ENCODE measurements at regions of chr12 and their contacts with region 1.

Region 1: DNA sequence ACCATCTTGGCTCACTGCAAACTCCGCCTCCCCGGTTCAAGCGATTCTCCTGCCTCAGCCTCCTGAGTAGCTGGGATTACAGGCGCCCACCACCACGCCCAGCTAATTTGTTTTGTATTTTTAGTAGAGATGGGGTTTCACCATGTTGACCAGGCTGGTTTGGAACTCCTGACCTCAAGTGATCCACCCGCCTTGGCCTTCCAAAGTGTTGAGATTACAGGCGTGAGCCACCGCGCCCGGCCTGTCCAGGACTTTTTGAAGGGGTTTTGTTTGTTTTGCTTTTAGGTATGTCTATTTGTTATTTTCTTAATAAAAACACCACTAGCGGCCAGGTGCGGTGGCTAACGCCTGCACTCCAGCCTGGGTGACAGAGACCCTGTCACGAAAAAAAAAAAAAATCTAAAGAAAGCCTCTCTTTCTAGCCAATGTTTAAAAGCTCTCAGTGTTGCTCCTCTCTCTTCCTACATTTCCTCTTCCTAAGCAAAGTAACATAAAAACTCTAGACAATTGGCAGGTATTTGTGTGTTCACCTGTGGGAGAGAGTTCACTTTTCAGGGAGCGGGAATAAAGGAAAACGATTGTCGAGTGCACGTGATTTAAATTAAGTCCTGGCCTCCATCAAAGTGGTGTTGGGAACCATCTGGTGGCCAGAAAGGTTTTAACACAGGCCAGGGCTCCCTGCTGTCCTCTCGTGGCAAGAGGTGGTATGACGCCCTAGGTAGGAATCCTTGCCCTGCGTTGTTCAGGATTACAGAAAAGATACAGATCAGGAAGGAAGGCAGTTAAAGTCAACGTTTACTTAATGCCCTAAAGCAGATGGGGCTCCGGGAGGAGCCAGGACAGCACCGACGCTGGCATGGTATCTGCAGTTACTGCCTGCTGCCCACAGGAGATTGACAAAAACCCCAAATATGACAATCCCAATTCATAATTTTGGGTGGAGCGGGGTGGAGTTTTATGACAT is 36.2 kb upstream of the ATP23 start:
- DNase-seq: peak; percentile 88 to 97
- H3K4me3 ChIP-seq: no peak overlapping the region
- CTCF ChIP-seq: peak; percentile 96 to 100 (median 99)
- POLR2A ChIP-seq: no peak

Region 2: GRCh38 chr12:57583008-57583831 is 321.9 kb before region 1 on chr12:
- intact Hi-C with region 1: loop called (anchors 10 kb)
- DNase-seq: peak in 1 of 2 donors; percentile 59
- H3K4me3 ChIP-seq: no peak overlapping the region
- CTCF ChIP-seq: peak in 1 of 3 donors; percentile 91
- POLR2A ChIP-seq: no peak

Region 3: DNA sequence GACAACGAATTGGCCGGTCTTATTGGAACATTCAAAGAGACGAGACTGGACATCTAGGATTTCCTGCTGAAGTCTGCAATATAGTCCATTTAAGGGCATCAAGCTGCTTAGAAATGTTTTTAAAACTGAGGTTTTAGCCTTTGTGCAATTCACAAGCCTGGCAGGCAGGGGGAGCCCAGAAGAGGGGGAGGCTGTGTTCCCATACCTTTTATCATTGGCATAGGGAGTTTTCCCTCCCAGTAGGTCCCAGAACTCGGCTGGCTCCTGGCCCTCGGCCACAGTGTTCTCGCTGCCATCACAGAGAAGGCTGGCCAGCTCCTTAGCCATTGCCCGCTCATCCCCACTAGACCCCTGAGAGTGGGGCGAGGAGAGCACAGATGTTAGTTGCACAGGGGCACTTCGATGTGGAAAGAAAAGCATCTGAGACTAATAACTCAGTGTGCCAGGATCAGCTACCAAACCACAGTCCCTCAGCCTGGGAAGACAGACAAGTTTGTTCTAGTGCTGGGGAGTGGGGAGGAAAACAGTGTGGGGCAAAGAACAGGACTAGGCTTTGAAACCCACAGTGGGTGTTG is 101.7 kb before region 1 on chr12:
- intact Hi-C with region 1: loop called (anchors 10 kb)
- DNase-seq: no peak
- H3K4me3 ChIP-seq: no peak overlapping the region
- CTCF ChIP-seq: peak in 1 of 3 donors; percentile 57
- POLR2A ChIP-seq: no peak

Region 4: DNA sequence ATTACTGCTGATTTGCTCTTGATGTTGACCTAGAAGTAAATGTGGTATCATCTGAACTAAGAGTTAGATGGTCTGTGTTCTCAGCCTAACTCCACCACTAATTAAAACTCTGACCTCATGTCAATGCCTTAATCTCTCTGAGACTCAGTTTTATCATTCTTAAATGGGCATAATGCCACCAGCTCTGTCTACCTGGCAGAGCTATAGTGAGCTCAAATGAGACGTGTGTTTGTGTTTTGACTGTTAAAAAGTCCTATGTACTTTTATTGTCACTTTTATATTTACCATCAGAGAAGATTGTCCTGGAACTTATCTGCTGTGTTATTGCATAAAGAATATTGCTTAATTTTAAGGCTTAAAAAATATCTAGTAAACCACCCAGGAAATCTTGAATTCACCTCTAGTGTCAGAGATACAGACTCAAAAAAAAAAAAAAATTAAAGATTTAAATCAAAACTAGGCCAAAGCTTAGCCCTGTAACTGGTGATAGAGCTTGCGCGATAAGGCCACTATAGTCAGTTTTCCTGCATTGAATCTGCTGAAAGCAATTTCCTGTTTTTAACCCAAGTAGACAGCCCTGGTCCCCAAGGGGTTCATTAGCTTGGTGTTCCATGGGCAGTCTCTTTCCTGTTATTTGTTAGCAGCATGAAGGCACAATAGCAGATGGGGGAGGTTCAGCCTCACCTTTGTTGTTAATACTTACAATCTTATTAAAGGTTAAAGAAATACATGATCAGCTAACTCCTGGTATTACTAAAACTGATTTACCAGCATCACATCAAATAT is 298.0 kb after region 1 on chr12:
- intact Hi-C with region 1: no loop called
- DNase-seq: no peak
- H3K4me3 ChIP-seq: no peak overlapping the region
- CTCF ChIP-seq: no peak
- POLR2A ChIP-seq: no peak